Activated CD8-positive, alpha-beta T cell treated with anti-CD3 and anti-CD28 coated beads for 36 hours (primary cell): ENCODE measurements at regions of chr11 and their contacts with region 1.

Region 1: GRCh38 chr11:128279866-128280265 is 307.5 kb downstream of the ETS1 start:
- DNase-seq: no peak
- ATAC-seq: no peak
- H3K4me3 Mint-ChIP-seq: no peak overlapping the region
- H3K27ac Mint-ChIP-seq: no peak overlapping the region
- H3K4me1 Mint-ChIP-seq: peaks cover 13% of the 10 kb centered on the region
- H3K27me3 Mint-ChIP-seq: peaks cover 2% of the 10 kb centered on the region
- CTCF ChIP-seq: no peak

Region 2: GRCh38 chr11:128261011-128261421 is 18.9 kb before region 1 on chr11:
- CTCF ChIA-PET with region 1: interaction called, 12 read pairs
- POLR2A ChIA-PET with region 1: no interaction called
- intact Hi-C with region 1: no loop called
- DNase-seq: no peak
- ATAC-seq: no peak
- H3K4me3 Mint-ChIP-seq: no peak overlapping the region
- H3K27ac Mint-ChIP-seq: no peak overlapping the region
- H3K4me1 Mint-ChIP-seq: peaks cover 2% of the 10 kb centered on the region
- H3K27me3 Mint-ChIP-seq: no peaks in the 10 kb centered on the region
- CTCF ChIP-seq: no peak